KBM-7 (cell line): ENCODE measurements at regions of chr11 and their contacts with region 1.

Region 1: DNA sequence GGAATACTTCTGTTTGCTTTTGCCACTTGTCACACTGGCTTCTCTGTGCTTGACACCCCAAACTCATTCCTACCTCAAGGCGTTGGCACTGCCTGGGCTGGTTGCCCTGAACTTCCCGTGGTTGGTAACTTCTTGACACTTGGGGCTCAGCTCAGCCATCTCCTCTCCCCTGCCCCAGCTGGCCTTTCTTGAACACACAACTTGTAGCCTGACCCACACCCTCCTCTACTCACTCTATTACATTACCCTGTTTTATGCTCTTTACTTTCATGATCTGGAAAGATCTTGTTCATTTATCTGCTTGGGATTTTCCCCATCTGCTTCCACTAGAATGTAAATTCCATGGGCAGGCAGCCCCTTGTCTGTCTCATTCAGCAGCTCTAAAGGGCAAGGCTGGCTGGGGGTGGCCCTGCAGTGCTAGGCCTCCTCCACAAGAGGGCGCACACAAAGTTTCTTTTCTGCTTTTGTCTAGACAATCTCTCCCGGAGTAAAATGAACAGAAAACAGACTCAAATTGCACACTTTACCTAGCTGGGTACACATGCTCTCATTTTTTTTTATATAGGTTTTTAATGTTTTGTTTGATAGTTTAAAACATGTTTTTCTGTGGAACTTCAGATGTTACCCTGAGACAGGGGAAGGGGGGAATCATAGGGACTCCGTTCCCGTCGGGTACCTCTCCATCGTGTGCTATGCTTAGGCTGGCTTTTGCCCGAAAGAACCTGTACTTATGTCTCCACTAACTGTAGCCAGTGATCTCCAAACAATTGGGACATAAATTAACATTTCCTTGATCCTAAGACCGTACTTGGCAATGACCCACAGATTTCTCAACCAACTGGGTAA is 16.4 kb upstream of the MRGPRX2 start:
- DNase-seq: peak; percentile 73

Region 2: DNA sequence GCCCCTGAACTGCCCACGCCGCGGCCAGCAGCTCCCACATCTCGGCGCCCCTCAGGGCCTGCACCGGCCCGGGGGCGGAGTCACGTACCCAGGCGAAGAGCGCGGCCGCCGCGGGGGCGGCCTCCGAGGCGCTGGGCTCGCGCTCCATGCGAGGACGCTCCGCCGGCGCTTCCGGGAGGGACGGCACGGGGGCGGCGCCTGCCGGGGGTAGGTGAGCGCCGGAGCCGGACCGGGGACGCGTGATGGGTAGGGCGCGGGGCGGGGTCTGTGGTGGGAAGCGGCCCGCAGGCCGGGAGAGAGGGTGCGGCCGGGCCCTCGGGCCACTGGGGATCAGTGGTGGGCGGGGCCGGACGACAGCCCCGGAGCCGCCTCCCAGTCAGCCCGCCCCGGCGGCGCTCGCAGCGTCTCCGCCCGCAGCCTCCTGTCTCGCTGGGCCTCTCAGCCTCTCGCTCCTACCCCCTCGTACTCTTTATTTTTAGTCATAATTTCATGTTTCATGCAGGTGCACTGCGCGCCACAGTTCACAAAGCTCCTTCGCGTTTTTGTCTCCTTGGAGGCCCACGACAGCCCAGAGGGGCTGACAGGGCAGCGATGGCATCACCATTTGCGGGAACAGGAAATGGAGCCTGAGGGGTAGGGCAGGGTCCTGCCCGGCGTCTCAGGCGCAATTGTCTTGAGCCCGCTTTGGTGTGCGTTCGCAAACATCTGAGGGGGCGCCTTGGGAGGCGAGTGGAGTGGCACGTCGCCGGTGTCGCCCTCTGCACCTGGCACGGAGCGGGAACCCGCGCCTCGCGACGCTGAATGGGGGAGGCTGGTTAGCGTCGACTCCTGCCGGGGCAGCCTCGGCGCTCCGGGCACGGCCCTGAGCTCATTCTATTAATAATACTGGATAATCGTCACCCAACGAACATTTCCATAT is 1063.8 kb before region 1 on chr11 and contains the start of gene SERGEF:
- in situ Hi-C with region 1: no loop called
- DNase-seq: peak; percentile 94

Region 3: GRCh38 chr11:18912883-18913282 is 164.1 kb before region 1 on chr11:
- in situ Hi-C with region 1: no loop called
- DNase-seq: no peak

Region 4: GRCh38 chr11:18974192-18974591 is 102.8 kb before region 1 on chr11:
- in situ Hi-C with region 1: no loop called
- DNase-seq: no peak

Region 5: GRCh38 chr11:19018901-19019300 is 58.1 kb before region 1 on chr11:
- in situ Hi-C with region 1: no loop called
- DNase-seq: peak; percentile 0

Region 6: DNA sequence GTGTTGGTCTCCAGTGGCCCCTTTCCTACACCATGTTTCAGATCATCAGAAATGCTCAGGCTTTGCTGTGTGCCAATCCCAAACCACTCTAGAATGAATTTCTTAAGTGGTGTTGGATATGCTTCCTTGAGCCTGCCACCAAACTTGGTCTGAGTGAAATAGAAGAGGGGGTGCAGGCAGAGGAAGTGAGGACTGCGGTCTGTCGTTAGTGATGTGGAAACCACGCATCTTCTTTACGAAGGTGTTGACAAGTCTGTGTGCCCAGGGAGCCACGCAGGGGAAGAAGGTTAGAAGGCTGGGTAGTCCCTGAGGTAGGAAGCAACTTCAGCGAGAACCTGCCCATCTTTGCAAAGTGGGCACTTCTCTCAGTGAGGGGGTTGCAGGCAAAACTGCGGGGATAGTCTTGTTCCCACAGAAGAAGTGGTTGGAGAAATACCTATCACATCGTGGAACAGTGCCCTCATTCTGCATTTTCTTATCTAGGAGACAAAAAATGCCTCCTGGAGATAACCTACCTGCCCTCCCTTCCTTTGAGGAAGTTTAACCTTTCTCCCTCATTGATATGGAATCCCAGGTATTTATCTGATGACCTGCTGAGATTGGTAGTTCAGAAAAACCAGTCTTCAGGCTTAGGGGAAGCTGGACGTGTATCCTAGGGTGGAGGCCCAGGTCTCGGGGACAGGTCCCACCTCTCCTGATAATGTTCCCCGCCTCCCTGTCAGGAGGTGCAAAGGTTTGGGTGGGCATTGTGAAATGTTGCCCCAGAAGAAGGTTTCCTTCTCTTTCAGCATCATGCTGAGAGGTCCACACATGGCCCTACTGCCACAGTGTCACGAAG is 448.5 kb after region 1 on chr11:
- in situ Hi-C with region 1: loop called (anchors 25 kb)
- DNase-seq: no peak